ENCODE measurements at regions of chr17 and their contacts with region 1.

Region 1: GRCh38 chr17:73371285-73371684 is 59.5 kb upstream of the CDC42EP4 start:
- DNase-seq: no peak
- ATAC-seq: no peak
- H3K4me3 Mint-ChIP-seq: no peak overlapping the region
- H3K27ac Mint-ChIP-seq: no peak overlapping the region
- H3K4me1 Mint-ChIP-seq: no peaks in the 10 kb centered on the region
- H3K27me3 Mint-ChIP-seq: peaks cover 4% of the 10 kb centered on the region

Region 2: GRCh38 chr17:72985881-72986720 is 385.2 kb before region 1 on chr17:
- CTCF ChIA-PET with region 1: interaction called, 11 read pairs
- POLR2A ChIA-PET with region 1: no interaction called
- DNase-seq: peak; percentile 69
- ATAC-seq: peak; percentile 81
- H3K4me3 Mint-ChIP-seq: no peak overlapping the region
- H3K27ac Mint-ChIP-seq: no peak overlapping the region
- H3K4me1 Mint-ChIP-seq: no peaks in the 10 kb centered on the region
- H3K27me3 Mint-ChIP-seq: no peaks in the 10 kb centered on the region

Region 3: GRCh38 chr17:73247726-73248125 is 123.6 kb before region 1 on chr17:
- CTCF ChIA-PET with region 1: interaction called, 120 read pairs
- POLR2A ChIA-PET with region 1: interaction called, 3 read pairs
- DNase-seq: no peak
- ATAC-seq: no peak
- H3K4me3 Mint-ChIP-seq: no peak overlapping the region
- H3K27ac Mint-ChIP-seq: no peak overlapping the region
- H3K4me1 Mint-ChIP-seq: no peaks in the 10 kb centered on the region
- H3K27me3 Mint-ChIP-seq: no peaks in the 10 kb centered on the region

Region 4: GRCh38 chr17:73255671-73256181 is 115.6 kb before region 1 on chr17:
- CTCF ChIA-PET with region 1: interaction called, 120 read pairs
- POLR2A ChIA-PET with region 1: interaction called, 5 read pairs
- DNase-seq: peak; percentile 68
- ATAC-seq: peak; percentile 79
- H3K4me3 Mint-ChIP-seq: no peak overlapping the region
- H3K27ac Mint-ChIP-seq: no peak overlapping the region
- H3K4me1 Mint-ChIP-seq: no peaks in the 10 kb centered on the region
- H3K27me3 Mint-ChIP-seq: no peaks in the 10 kb centered on the region

Region 5: DNA sequence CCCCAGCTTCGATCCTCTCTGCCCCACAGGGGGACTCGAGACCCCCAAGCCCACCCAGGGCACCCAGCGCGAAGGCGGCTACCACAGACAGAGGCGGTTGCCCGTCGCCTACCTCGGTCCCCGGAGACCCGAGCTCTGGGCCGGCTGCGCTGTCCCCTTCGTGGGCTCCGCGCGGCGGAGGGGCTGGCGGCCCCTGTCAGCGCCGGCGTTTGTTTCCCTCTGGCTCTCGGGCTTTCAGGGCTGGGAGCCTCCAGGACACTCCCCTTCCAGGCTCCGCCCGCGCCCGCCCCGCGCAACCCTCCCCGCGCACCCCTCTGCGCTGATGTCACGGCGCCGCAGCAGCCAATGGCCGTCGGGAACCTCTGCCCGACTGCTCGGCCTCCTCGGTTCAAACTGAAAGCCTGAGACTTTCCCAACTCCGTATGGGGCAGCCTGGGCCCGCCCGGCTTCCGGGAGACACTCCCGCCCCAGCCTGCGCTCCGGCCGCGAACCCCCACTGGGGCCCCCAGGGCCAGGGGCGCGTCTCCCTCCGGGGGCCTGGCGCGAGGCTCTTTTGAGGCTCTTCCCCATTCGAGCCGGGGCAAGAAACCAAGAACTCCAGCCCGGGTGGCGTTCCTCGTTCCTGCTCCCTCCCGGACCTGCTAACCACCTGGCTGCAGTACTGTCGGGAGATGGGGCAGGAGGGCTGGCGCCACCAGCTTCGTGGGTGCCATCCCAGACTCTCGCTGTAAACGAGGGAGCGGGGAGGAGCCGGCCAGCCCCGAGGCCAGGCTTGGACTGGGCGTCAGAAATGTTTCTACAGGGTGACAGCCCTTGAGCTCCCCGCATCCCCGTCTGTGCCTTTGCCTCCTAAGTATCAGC is 59.3 kb before region 1 on chr17 and contains the start of gene CDC42EP4:
- CTCF ChIA-PET with region 1: interaction called, 17 read pairs
- POLR2A ChIA-PET with region 1: no interaction called
- DNase-seq: peak; percentile 88
- ATAC-seq: peak; percentile 96
- H3K4me3 Mint-ChIP-seq: peak within 1 kb of the TSS; percentile 77
- H3K27ac Mint-ChIP-seq: no peak within 1 kb of the TSS
- H3K4me1 Mint-ChIP-seq: peaks cover 18% of the 10 kb centered on the region
- H3K27me3 Mint-ChIP-seq: peaks cover 17% of the 10 kb centered on the region
- total RNA-seq, gene CDC42EP4: 0.58 to 1.1 TPM

Region 6: GRCh38 chr17:73335591-73336407 is 35.5 kb before region 1 on chr17:
- CTCF ChIA-PET with region 1: no interaction called
- POLR2A ChIA-PET with region 1: no interaction called
- DNase-seq: no peak
- ATAC-seq: no peak
- H3K4me3 Mint-ChIP-seq: no peak overlapping the region
- H3K27ac Mint-ChIP-seq: no peak overlapping the region
- H3K4me1 Mint-ChIP-seq: no peaks in the 10 kb centered on the region
- H3K27me3 Mint-ChIP-seq: no peaks in the 10 kb centered on the region

Region 7: DNA sequence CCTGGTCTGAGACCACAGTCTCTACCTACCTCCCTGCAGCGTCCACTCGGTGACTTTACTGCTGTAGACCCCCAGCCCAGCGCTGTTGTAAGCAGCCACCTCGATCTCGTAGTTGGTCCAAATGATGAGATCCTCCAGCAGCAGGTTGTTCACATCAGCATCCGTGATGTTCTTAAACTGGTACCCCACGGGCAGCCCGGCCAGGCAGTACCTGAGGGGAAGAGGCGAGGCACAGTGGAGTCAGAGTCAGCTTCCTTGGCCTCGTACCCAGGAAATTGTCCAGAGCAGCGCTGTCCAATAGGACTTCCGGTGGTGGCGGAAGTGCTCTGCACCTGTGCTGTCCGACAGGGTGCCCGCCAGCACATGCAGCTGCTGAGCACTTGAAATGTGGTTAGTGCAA is 44.5 kb after region 1 on chr17:
- CTCF ChIA-PET with region 1: no interaction called
- POLR2A ChIA-PET with region 1: no interaction called
- DNase-seq: no peak
- ATAC-seq: no peak
- H3K4me3 Mint-ChIP-seq: no peak overlapping the region
- H3K27ac Mint-ChIP-seq: no peak overlapping the region
- H3K4me1 Mint-ChIP-seq: peaks cover 2% of the 10 kb centered on the region
- H3K27me3 Mint-ChIP-seq: no peaks in the 10 kb centered on the region

Measured in activated CD8-positive, alpha-beta T cell treated with anti-CD3 and anti-CD28 coated beads, Interleukin-2, amount 10 ng/mL, durations not matched to agents 7 days and 5 days (primary cell).